Posterior cingulate gyrus (tissue), 11 donors: ENCODE measurements at regions of chr7 and their contacts with region 1.

Region 1: DNA sequence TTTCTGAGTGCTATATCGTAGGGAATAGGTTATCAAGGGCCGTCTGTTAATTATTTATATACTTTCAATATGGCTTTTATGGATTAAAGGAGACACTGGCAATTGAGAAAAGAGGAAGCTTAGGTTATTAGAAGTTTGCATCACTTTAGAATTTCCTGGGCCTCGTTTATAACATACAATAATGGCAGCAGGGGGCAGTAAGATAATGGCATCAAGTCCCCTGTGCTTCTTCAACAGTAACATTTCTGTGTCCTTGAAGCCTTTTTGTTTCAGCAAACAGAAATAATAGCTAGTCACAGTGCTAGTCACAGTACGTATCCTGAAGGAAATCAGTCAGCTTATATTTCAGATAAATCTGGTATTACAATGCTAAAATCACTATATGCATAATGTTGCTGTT is 41.9 kb downstream of the SPAM1 start:
- DNase-seq: peak in 1 of 10 donors; percentile 47

Region 2: DNA sequence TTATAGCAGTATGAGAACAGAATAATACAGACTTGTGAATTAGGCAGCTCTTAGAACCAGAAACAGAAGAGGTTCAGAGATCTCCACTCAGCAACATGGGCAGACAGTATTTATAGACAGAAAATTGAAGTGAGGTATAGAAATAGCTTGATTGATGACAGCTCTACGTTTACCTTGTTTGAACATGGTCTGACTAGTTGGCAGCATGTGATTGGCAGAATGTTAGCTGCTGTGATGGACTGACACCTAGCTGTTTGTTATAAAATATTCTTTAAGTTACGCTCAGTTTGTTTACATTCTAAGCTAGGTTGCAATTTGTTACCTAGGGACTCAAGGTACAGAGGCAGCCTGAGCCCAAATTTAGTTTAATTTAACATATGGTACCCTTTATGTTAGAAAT is 139.6 kb after region 1 on chr7:
- intact Hi-C with region 1: loop called (anchors 1 kb)
- DNase-seq: no peak